GM23248 (cell line): ENCODE measurements at regions of chr4 and their contacts with region 1.

Region 1: DNA sequence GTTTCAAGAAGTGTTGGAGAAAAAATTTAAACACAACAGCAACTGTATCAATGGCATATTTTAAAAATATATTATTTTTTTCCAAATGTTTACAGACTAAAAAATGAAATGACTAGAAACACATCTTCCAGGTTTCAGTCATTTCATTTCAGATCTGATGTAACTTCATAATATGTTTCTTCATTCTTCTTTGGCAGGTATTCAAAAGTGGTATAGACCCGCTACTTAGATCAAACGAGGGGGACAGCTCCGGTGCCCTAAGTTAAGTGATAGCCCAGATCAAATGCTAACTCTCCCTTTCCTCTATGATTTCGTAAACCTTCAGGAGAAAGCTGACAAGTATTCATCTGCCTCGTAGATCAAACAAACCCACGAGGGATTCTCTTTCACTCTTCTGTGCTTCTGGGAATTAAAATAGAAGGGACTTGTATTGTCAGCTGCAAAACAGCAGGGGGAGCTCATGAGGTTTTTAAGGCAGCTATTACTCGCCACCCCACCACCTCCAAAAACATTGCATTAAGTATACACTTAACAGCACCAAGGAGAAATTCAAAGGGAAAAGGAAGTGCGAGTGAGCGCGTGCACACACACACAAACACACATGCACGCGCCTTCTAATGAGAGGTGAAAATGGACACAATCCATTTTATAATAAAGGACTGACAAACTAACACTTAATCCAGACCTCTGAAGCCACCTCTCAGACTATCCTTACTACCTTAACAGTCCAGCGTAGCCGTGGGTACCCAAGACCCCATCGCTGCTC is 21.4 kb downstream of the HELT start:
- DNase-seq: peak; percentile 74
- H3K4me3 ChIP-seq: peak overlapping the region; percentile 72
- H3K27ac ChIP-seq: no peak overlapping the region
- H3K4me1 ChIP-seq: no peaks in the 10 kb centered on the region
- H3K27me3 ChIP-seq: no peaks in the 10 kb centered on the region; the same call in 1 of the 2 replicates

Region 2: GRCh38 chr4:184825896-184826690 is 213.6 kb before region 1 on chr4 and contains the start of gene ACSL1:
- in situ Hi-C with region 1: no loop called
- DNase-seq: peak; percentile 87
- H3K4me3 ChIP-seq: peak within 1 kb of the TSS; percentile 77
- H3K27ac ChIP-seq: peak within 1 kb of the TSS; percentile 36; the same call in 1 of the 2 replicates
- H3K4me1 ChIP-seq: no peaks in the 10 kb centered on the region
- H3K27me3 ChIP-seq: no peaks in the 10 kb centered on the region; the same call in 1 of the 2 replicates
- total RNA-seq, gene ACSL1: 16.8 and 22.6 TPM in 2 replicates

Region 3: GRCh38 chr4:185536411-185536709 is 496.7 kb after region 1 on chr4:
- in situ Hi-C with region 1: no loop called
- DNase-seq: peak; percentile 45
- H3K4me3 ChIP-seq: peak overlapping the region; percentile 79; the same call in 1 of the 2 replicates
- H3K27ac ChIP-seq: no peak overlapping the region
- H3K4me1 ChIP-seq: no peaks in the 10 kb centered on the region; the same call in 1 of the 2 replicates
- H3K27me3 ChIP-seq: peaks cover 63% of the 10 kb centered on the region

Region 4: GRCh38 chr4:186037692-186038658 is 998.3 kb after region 1 on chr4:
- in situ Hi-C with region 1: loop called (anchors 25 kb)
- DNase-seq: peak; percentile 69
- H3K4me3 ChIP-seq: no peak overlapping the region
- H3K27ac ChIP-seq: no peak overlapping the region
- H3K4me1 ChIP-seq: no peaks in the 10 kb centered on the region
- H3K27me3 ChIP-seq: peaks cover 14% of the 10 kb centered on the region